ENCODE measurements at regions of chr10 and their contacts with region 1.

Region 1: DNA sequence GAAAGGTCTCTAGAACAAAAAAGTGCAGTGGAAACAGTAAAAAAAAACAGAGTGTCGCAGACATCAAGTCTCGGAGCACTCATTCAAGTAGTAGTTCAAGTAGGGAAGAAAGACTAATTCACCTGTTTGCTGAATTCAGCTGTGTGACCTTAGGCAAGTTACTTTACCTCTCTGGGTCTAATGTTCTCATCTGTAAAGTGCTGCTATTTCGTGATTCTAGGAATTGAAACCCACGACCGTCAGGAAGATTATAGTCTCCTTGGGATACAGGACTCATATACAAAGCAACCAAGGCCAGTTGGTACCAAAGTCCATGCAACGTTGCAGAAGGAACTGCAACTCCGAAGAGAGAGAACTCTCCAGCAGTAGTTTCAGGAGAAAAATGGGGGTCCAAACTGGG is 26.1 kb downstream of the PRKCQ start:
- DNase-seq: no peak
- ATAC-seq: no peak
- H3K4me3 ChIP-seq: no peak overlapping the region
- H3K4me3 Mint-ChIP-seq: no peak overlapping the region
- H3K27ac ChIP-seq: peak overlapping the region in 1 of 2 donors; percentile 7
- H3K27ac Mint-ChIP-seq: peak overlapping the region; percentile 81
- H3K4me1 ChIP-seq: peaks cover 49% of the 10 kb centered on the region
- H3K4me1 Mint-ChIP-seq: peaks cover 86% of the 10 kb centered on the region
- H3K27me3 ChIP-seq: no peaks in the 10 kb centered on the region
- H3K27me3 Mint-ChIP-seq: no peaks in the 10 kb centered on the region
- CTCF ChIP-seq: no peak

Region 2: DNA sequence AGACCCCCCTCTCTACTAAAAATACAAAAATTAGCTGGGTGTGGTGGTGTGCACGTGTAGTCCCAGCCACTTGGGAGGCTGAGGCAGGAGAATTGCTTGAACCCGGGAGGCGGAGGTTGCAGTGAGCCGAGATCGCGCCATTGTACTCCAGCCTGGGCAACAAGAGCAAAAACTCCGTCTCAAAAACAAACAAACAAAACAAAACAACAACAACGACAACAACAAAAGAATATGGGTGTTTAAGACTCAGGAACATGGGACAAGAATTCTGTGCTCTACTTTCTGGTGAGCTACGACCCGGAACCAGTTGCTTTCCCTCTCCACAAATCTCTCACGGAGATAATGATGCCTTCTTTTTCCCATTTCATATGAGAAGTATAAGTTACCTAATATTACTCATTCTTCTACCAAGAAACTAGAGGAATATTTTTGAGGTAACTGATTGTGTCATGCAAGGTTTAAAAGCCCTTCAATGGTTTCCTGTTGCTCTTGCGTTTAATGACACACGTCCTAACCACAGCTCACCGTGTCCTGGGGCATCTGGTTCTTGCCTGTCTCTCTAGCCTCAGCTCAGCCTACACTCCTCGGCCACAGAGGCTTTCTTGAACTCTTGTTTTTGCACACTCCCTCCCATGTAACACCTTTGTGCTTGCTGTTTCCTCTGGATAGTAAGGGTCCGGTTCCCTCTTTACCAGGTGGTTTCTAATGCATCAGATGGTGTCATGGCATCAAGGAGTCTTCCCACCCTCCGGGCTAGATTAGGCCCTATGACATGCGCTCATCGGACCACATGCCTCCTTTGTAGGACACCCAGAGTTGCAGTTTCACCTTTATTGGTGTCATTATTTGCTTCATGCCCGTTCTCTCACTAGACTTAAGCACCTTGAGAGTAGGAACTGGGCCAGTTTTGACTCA is 283.7 kb before region 1 on chr10:
- CTCF ChIA-PET with region 1: no interaction called
- POLR2A ChIA-PET with region 1: no interaction called
- intact Hi-C with region 1: no loop called
- DNase-seq: peak; percentile 44 to 91 (median 56)
- ATAC-seq: peak; percentile 71
- H3K4me3 ChIP-seq: no peak overlapping the region
- H3K4me3 Mint-ChIP-seq: peak overlapping the region; percentile 7
- H3K27ac ChIP-seq: peak overlapping the region; percentile 2 to 43
- H3K27ac Mint-ChIP-seq: peak overlapping the region; percentile 90
- H3K4me1 ChIP-seq: peaks cover 44% of the 10 kb centered on the region
- H3K4me1 Mint-ChIP-seq: peaks cover 44% of the 10 kb centered on the region
- H3K27me3 ChIP-seq: no peaks in the 10 kb centered on the region
- H3K27me3 Mint-ChIP-seq: no peaks in the 10 kb centered on the region
- CTCF ChIP-seq: no peak

Region 3: DNA sequence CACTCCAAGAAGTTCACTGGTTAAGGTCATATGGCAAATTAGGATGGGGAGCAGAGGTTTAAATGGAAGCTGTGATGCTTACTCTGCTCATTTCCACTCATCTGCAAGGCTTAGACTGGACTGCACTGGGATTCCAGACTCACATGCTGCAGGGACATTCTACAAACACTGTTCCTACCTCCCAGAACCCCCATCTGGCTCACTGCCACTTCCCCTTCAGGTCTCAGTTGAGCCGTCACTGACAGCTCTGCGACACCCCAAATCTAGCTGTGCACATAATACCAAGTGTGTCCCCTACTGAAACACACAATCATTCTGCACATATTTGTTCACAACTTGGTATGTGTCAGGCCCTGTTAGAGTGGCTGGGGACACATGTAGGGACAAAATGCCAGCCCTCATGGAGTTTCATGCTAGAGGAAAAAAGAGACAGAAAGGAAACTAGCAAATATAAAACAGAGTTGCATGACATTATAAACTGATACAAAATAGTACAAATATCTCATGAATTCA is 20.8 kb after region 1 on chr10:
- CTCF ChIA-PET with region 1: interaction called, 4 read pairs
- POLR2A ChIA-PET with region 1: interaction called, 17 read pairs
- intact Hi-C with region 1: loop called in 1 of 2 experiments (anchors 2 kb)
- DNase-seq: peak in 1 of 14 experiments; percentile 27
- ATAC-seq: no peak
- H3K4me3 ChIP-seq: no peak overlapping the region
- H3K4me3 Mint-ChIP-seq: peak overlapping the region; percentile 45
- H3K27ac ChIP-seq: peak overlapping the region in 1 of 2 donors; percentile 30
- H3K27ac Mint-ChIP-seq: peak overlapping the region; percentile 75
- H3K4me1 ChIP-seq: peaks cover 68% of the 10 kb centered on the region
- H3K4me1 Mint-ChIP-seq: peaks cover 91% of the 10 kb centered on the region
- H3K27me3 ChIP-seq: no peaks in the 10 kb centered on the region
- H3K27me3 Mint-ChIP-seq: no peaks in the 10 kb centered on the region
- CTCF ChIP-seq: no peak

Region 4: GRCh38 chr10:6755781-6756460 is 202.0 kb after region 1 on chr10:
- CTCF ChIA-PET with region 1: no interaction called
- POLR2A ChIA-PET with region 1: no interaction called
- intact Hi-C with region 1: no loop called
- DNase-seq: no peak
- ATAC-seq: no peak
- H3K4me3 ChIP-seq: no peak overlapping the region
- H3K4me3 Mint-ChIP-seq: no peak overlapping the region
- H3K27ac ChIP-seq: no peak overlapping the region
- H3K27ac Mint-ChIP-seq: no peak overlapping the region
- H3K4me1 ChIP-seq: no peaks in the 10 kb centered on the region
- H3K4me1 Mint-ChIP-seq: no peaks in the 10 kb centered on the region
- H3K27me3 ChIP-seq: peaks cover 15 to 35% of the 10 kb centered on the region in 2 experiments
- H3K27me3 Mint-ChIP-seq: peaks cover 58% of the 10 kb centered on the region
- CTCF ChIP-seq: no peak